Panc1 (cell line): ENCODE measurements at regions of chr4 and their contacts with region 1.

Region 1: DNA sequence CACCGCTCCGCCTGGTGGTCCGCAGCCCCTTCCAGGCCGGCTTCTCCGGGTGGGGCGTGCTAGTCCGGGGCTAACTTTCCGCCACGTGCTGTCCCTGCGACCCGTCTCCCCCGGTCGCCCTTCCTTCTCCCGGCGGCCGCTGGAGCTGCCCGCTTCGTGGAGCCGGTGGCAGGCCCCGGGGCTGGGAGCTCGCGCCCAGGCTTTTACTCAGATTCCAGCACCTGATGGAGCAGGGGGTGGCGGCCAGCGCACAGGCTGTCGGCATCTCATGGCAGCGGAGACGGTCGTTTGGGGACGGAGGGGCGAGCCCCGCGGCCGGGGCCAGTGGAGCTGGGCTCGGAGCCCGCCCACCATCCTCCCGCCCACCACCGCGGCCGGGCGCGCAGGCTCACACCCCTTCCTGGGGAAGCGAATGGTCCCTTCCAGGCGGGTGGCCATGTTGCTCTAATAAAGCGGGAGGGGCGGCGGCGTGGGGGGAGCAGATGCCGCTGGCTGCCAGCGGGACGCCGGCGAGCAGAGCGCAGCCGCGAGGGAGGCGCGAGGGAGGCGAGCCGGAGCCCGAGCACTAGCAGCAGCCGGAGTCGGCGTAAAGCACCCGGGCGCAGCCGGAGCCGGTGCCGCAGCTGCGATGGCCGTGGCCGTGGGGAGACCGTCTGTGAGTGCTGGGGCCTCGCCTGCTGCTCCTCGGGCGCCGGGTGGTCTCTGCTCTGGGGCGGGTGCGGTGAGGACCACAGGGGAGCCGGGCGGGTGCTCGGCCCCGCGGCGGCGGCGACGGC is at the start of gene SEPTIN11:
- DNase-seq: no peak
- ATAC-seq: peak; percentile 89
- H3K4me3 ChIP-seq: peak within 1 kb of the TSS; percentile 82 to 83
- H3K27ac ChIP-seq: peak within 1 kb of the TSS; percentile 79
- H3K4me1 ChIP-seq: peaks cover 12% of the 10 kb centered on the region
- H3K27me3 ChIP-seq: no peaks in the 10 kb centered on the region
- CTCF ChIP-seq: no peak
- total RNA-seq, gene SEPTIN11: 103 TPM

Region 2: GRCh38 chr4:75099321-75099720 is 1850.1 kb before region 1 on chr4:
- CTCF ChIA-PET with region 1: no interaction called
- POLR2A ChIA-PET with region 1: no interaction called
- in situ Hi-C with region 1: no loop called
- intact Hi-C with region 1: no loop called
- DNase-seq: no peak
- ATAC-seq: no peak
- H3K4me3 ChIP-seq: no peak overlapping the region
- H3K27ac ChIP-seq: no peak overlapping the region
- H3K4me1 ChIP-seq: no peaks in the 10 kb centered on the region
- H3K27me3 ChIP-seq: no peaks in the 10 kb centered on the region
- CTCF ChIP-seq: no peak

Region 3: DNA sequence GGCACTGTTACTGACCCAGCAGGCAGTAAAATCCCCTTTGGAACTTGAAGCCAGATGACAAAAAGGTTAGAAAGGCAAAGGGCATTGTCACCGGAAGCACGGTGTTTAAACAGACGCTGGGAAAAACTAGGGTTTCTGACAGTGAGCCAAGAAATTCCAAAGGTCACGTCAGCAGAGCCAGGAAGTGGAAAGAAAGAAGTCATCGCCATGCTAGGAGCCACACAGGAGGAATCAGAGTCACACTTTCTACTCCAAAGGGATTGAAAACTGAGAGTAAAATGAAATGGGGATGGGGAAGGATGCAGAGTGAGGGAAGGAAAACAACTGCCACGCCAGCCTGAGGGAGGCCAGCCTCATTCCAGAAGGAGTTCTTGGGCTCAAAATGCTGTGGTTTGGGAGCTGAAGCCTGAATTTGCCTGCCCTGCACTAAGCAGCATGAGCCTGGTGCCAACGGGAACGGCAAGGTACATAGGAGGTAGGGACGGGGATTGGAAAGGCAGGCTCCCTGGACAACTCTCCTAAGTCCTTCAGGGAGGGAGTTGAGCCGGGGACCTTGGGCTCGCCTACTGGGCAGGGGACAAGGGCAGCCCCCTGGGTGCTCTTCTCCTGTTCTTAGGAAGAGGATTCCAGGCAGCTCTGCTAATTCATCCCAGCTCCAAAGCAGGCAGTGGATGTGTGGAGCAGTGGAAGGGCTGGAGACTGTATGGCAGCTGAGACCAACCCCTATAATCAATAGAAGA is 118.3 kb before region 1 on chr4:
- CTCF ChIA-PET with region 1: interaction called, 3 read pairs
- POLR2A ChIA-PET with region 1: no interaction called
- in situ Hi-C with region 1: no loop called
- intact Hi-C with region 1: loop called (anchors 5 kb)
- DNase-seq: peak; percentile 88
- ATAC-seq: peak; percentile 88
- H3K4me3 ChIP-seq: peak overlapping the region; percentile 5 to 26; a peak in 2 of 4 replicates
- H3K27ac ChIP-seq: peak overlapping the region; percentile 87
- H3K4me1 ChIP-seq: peaks cover 18% of the 10 kb centered on the region
- H3K27me3 ChIP-seq: no peaks in the 10 kb centered on the region
- CTCF ChIP-seq: no peak